ENCODE measurements at regions of chr7 and their contacts with region 1.

Region 1: DNA sequence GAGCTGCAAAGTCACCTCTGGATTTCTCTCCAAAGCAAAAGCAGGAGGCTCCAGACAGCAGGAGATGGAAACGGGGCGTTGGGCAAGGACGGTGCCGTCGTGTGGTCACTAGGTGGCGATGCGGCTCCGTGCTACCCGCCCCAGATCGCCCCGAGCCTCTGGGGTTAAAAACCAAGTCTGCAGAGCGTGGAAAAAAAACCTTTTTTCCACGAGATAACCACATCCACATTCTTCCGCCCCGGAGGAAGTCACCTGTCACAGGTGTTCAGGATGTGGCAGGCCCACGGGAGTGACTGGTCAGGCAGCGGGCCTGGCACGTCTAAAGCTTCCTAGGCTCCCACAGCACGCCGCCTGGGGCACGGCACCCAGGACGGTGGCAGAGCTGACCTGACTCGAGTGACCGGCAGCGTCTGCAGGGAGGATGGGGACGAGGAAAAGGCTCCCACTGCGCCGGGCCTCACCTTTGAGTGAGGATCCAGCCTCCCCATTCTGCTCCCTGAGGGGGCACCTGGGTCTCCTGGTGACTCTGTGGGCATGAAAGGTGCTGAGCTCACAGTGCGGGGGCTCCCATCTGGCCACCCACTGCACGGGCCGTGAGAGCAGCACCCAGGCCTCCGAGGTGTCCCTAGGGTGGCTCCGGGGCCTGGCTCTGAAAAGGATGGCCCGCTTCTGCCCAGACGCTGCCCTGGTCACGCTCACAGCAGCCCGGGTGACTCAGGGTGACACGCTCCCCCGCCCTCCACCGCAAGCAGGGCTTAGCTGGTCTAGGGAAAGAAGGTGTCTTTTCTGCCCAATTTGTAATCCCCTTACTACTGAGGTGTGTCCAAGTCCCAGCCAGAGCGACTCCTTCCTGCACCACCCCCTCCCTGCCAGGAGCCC is 71.3 kb upstream of the TNRC18 start:
- DNase-seq: peak; percentile 83

Region 2: GRCh38 chr7:5557920-5558401 is 63.0 kb after region 1 on chr7:
- CTCF ChIA-PET with region 1: interaction called, 38 read pairs
- POLR2A ChIA-PET with region 1: no interaction called
- DNase-seq: no peak

Region 3: DNA sequence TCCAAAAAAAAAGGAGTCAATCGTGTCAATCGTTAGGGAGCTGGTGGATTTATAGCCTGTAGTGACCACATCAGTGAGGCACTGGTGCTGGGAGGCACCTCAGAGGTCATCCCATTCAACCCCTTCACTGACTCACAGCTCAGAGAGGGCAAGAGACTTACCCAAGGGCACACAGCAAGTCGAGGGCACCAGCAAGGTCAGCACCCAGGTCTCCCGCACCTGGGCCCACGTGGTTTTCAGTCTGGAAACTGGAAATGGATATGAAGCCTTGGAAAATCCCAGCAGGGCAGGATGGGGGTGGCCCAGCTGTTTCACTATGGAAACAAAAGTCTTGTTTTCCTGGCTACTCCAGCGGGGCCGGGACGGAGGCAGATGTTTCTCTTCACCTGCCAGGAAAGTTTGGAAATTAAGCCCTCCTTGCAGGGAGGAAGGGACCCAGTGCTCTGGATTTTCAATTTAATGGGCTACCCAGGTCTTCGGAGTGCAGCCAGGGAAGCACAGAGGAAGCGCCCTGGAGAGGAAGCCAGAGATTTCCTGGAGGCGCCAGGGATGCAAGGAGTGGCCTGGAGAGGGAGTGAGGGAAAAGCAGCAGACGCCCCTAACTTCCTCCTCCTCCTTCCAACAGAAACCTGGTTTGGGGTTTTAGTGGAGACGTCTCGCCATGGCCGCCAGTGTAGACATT is 85.9 kb after region 1 on chr7:
- CTCF ChIA-PET with region 1: no interaction called
- POLR2A ChIA-PET with region 1: no interaction called
- DNase-seq: no peak